ENCODE measurements at regions of chr9 and their contacts with region 1.

Region 1: DNA sequence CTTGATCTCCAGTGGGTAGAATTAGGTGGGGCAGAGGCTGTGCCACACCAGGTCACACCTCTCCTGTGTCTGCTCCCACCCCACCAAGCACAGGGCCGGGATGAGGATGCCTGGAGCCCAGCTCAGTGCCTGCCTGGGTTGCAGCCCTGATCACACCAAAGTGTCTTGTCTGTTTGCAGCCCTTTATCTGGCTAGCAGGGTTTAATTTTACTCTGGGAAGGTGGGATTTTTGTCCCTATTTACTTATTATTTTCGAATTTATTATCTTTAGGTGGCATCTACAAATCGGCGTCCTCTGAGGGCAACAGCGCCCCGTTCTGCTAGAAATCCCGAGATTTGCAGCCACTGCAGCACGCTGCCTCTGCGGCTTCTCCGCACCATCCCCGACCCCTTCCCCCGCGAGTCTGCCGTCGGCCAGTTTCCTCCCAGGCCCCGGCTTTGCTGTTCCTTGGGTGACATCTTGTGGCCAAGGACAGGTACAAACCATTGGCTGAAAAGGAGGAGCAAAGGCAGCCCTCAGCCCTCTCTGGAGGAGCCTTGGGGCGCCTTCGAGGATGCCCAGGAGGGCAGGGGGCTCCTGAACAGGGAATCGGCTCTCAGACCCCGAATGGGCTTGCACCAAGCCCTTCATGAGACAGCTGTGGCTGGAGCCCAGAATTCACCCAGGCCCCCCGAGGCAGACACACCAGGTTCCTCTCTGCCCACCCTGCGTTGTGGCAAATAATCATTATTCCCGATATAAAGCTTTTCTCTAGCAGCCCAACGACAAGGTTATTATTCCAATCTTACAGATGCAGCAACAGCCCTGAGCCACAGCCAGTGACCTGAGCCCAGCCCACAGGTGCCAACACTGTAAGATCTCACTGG is 113.0 kb downstream of the GAPVD1 start:
- DNase-seq: peak; percentile 42 to 81 (median 70)
- H3K4me3 ChIP-seq: peak overlapping the region in 57 of 59 donors; percentile 15 to 68 (median 48)
- H3K27ac ChIP-seq: peak overlapping the region in 3 of 59 donors; percentile 22 to 44 (median 39)
- H3K27me3 ChIP-seq: no peaks in the 10 kb centered on the region
- CTCF ChIP-seq: peak; percentile 31 to 86 (median 74)

Region 2: DNA sequence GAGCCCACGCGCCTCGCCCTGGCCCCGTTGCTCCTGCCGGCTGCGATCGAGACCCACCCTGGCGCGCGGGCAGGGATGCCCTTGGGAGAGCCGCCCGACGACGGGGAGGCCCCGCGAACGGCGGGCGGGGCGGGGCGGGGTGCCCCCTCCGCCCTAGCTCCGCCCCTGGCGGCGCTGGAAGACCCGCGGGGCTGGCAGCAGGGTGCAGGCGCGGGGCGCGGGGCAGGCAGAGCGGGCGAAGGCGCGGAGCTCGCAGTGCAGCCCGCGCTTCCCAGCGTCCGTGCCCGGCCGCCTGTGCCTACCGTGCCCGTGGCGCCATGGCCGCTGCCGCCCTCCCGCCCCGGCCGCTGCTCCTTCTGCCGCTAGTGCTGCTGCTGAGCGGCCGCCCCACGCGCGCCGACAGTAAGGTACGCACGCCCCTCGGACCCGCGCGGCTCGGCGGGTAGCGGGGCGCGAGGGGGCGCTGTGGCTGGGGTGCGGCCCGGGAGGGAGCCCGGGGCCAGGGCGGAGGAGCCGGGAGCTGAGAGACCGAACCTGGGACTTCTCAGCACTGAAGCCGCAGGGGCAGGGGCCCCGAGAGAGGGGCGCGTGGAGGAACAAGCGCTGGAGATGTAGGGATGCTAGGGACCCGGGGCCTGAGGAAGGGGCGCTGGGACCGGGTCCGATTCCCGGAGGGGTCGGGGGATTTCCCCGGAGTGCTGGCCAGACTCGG is 597.6 kb before region 1 on chr9 and contains the start of gene OLFML2A:
- intact Hi-C with region 1: loop called (anchors 2 to 5 kb)
- DNase-seq: peak in 3 of 10 donors; percentile 25 to 41 (median 29)
- H3K4me3 ChIP-seq: peak within 1 kb of the TSS; percentile 36 to 75 (median 58)
- H3K27ac ChIP-seq: peak within 1 kb of the TSS in 21 of 59 donors; percentile 4 to 78 (median 54)
- H3K27me3 ChIP-seq: peaks cover 0 to 15% (median 0%) of the 10 kb centered on the region in 45 donors
- CTCF ChIP-seq: peak in 27 of 56 donors; percentile 8 to 46 (median 29)
- total RNA-seq, gene OLFML2A: 0.36 to 21.2 (median 4.4) TPM

Region 3: GRCh38 chr9:124820698-124821623 is 553.7 kb before region 1 on chr9:
- intact Hi-C with region 1: no loop called
- DNase-seq: no peak
- H3K4me3 ChIP-seq: no peak overlapping the region
- H3K27ac ChIP-seq: no peak overlapping the region
- H3K27me3 ChIP-seq: no peaks in the 10 kb centered on the region
- CTCF ChIP-seq: no peak

Region 4: GRCh38 chr9:125161284-125161918 is 213.3 kb before region 1 on chr9:
- intact Hi-C with region 1: no loop called
- DNase-seq: no peak
- H3K4me3 ChIP-seq: no peak overlapping the region
- H3K27ac ChIP-seq: no peak overlapping the region
- H3K27me3 ChIP-seq: no peaks in the 10 kb centered on the region
- CTCF ChIP-seq: no peak

Region 5: DNA sequence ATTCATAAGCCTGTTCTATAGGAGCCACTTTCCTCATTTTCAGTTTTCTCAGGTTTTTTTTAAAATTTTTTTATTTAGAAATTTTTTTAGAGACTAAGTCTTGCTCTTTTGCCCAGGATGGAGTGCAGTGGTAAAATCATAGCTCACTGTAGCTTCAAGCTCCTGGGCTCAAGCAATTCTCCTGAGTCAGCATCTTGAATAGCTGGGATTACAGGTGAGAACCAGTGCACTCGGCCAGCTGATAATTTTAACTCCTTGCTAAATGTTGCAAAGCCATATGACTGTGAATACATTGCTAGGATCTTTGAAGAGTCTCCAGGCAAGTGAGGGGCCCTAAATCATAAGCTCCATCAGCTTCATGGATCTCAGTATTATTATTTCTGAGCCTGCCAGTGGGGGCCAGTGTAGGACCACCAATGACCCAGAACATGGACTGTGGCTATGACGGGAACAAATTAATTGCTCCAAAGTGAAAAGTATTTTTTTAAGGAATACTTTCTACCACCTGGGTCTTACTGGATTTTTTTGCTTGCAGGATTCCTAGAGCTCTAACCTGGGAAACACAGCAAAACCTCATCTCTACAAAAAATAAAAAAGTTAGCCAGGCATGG is 118.8 kb before region 1 on chr9:
- intact Hi-C with region 1: loop called in 1 of 2 experiments (anchors 10 kb)
- DNase-seq: no peak
- H3K4me3 ChIP-seq: no peak overlapping the region
- H3K27ac ChIP-seq: no peak overlapping the region
- H3K27me3 ChIP-seq: no peaks in the 10 kb centered on the region
- CTCF ChIP-seq: peak in 4 of 56 donors; percentile 8 to 31 (median 16)

Region 6: GRCh38 chr9:125409637-125410521 is 35.2 kb after region 1 on chr9:
- intact Hi-C with region 1: no loop called
- DNase-seq: peak in 3 of 10 donors; percentile 48 to 82 (median 72)
- H3K4me3 ChIP-seq: peak overlapping the region in 15 of 59 donors; percentile 12 to 63 (median 30)
- H3K27ac ChIP-seq: peak overlapping the region in 3 of 59 donors; percentile 58 to 75 (median 71)
- H3K27me3 ChIP-seq: peaks cover 0 to 10% (median 0%) of the 10 kb centered on the region in 45 donors
- CTCF ChIP-seq: no peak

Region 7: DNA sequence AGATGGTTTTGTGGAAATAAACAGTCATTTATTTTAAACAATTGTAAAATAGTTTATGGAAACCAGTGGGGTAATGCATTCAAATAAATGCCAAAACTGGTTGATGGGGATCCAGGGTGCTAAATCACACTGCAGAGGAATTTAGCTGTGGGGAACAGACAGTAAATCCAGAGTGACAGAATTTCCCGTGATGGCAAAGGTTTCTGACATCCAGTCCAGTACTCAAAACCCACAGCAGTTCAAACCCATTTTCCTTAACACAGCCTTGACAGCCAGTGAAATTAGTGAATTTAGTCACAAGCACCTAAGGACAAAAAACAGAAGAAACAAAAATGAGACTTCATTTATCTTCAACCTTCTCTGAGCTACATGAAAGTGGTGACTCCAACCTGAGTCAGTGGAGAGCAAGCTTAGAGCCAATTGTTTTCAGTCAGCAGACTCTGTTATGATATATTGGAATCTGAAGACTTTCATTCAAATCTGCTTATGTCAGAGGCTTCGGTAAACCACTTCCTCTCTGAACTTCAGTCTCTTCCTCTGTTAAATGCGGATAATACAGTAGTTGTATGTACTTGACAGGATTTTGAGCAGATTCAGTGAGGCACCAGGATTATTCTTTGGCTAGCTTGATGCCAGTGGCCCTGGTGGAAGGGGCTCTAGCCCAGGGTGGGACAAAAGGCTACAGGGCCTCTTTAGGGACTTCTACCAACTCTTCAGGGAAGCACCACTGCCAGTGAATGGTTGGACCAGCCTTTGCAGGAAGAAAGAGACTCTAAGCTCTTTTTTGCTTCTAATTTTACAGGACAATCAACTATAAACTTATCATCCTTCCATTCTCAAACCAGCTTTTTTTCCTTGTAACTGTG is 147.0 kb after region 1 on chr9:
- intact Hi-C with region 1: no loop called
- DNase-seq: no peak
- H3K4me3 ChIP-seq: no peak overlapping the region
- H3K27ac ChIP-seq: no peak overlapping the region
- H3K27me3 ChIP-seq: no peaks in the 10 kb centered on the region
- CTCF ChIP-seq: no peak